Gastrocnemius medialis (tissue), 4 donors: ENCODE measurements at regions of chrX and their contacts with region 1.

Region 1: DNA sequence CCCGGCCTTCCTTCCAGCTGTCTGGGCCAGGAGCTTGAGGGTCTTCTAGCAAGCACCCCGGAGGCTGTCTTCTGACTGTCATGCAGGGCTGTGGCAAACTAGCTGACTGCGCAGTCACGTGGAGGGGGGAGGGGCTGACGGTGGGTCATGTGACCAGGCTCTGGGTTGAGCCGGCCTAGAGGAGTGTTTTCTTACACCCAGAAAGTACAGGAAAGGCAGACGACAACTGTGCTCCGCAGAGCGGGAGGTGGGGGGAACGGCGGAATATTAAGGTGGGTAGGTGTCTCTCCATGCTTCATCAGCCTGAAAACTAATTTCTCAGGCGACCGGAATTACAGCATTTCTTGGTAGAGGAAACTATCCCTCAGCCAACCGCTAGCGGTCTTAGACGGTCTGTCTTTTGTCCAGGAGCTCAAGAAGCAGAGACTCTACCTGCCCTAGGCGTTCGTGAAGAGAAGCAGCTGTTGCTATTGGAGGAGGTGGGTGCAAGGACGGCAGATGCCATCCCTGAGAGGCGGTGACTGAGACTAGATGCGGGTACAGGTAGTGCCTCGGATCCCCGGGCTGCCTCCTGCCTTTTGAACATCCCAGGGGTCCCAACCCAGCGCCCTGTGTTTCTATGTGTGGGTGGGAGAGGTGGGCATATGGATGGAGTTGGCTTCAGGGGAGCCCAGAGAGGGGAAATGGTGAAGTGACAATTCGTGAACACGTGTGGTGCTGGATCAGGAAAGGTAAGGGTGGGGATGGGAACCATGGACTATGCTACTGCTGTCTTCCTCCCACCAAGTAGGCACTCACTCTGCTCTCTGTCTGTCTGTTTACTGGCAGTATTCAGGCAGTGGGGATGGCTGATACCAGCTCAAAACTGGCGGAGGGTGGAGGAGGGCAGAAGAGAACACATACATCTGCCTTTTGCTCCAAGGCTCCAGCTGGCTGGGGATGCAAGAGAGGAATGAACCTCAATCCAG is 8.8 kb downstream of the GPRASP1 start:
- DNase-seq: peak; percentile 80 to 83
- ATAC-seq: peak; percentile 91 to 98
- H3K4me3 ChIP-seq: peak overlapping the region; percentile 55 to 69 (median 61)
- H3K27ac ChIP-seq: peak overlapping the region; percentile 77 to 84 (median 84)
- H3K4me1 ChIP-seq: no peaks in the 10 kb centered on the region
- H3K27me3 ChIP-seq: no peaks in the 10 kb centered on the region
- CTCF ChIP-seq: no peak
- POLR2A ChIP-seq: peak; percentile 47 to 77

Region 2: GRCh38 chrX:101931488-101932248 is 728.4 kb before region 1 on chrX and contains the start of gene ZMAT1:
- in situ Hi-C with region 1: no loop called
- intact Hi-C with region 1: loop called (anchors 5 kb)
- DNase-seq: peak; percentile 86 to 95
- ATAC-seq: peak; percentile 98 to 99
- H3K4me3 ChIP-seq: peak within 1 kb of the TSS; percentile 65 to 79 (median 71)
- H3K27ac ChIP-seq: peak within 1 kb of the TSS; percentile 87 to 98 (median 94)
- H3K4me1 ChIP-seq: no peaks in the 10 kb centered on the region
- H3K27me3 ChIP-seq: no peaks in the 10 kb centered on the region
- CTCF ChIP-seq: no peak
- POLR2A ChIP-seq: peak; percentile 86 to 90
- total RNA-seq, gene ZMAT1: 0.68 to 2.7 (median 1.2) TPM

Region 3: DNA sequence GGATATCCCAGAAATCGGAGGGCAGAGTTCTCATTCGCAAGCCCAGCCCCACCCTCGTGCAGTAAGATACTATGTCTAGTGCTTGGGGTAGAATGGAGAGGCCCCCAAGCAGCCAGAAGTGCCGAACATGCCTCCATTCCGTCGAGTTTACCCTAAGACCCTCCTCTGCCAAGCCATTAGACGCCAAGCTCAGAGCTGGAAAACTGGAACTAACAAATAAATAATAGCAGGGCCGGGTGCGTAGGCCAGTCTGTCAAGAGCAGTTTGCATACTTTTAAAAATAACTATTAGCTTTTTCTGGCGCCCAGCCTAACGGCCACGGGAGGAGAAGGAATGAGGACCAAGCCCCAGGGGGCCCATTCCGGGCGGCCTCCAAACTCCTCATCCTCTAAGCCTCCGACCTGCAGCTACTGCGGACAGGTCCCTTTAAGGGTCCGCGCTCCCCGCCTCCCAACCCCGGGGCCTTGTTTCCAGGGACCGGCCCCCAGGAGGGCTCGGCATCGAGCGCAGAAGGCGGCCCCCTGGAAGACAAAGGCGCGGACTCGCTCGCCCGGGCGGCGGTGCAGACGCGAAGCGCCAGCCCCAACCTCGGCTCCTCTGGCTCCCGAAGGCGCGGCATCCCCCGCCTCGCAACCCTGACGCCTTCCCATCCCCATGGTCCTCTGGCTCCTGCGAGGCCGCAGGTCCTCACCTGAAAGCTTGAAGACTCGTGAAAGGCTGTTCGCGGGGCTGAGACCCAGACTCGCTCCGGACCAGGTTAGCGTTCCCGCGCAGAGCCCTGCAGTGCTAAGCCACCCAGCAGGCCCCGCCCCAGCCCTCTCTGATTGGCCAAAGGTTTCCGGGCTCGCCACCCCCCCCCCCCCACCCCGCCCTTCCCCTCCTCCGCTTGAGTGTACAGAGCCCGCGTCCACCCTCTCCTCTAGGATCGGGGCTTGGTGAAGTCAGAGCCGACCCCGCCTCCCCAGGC is 143.8 kb before region 1 on chrX and contains the start of gene TMSB15A:
- in situ Hi-C with region 1: no loop called
- intact Hi-C with region 1: loop called (anchors 2 kb)
- DNase-seq: peak; percentile 4 to 32
- ATAC-seq: peak in 1 of 2 donors; percentile 33
- H3K4me3 ChIP-seq: peak within 1 kb of the TSS; percentile 43 to 52 (median 47)
- H3K27ac ChIP-seq: no peak within 1 kb of the TSS
- H3K4me1 ChIP-seq: no peaks in the 10 kb centered on the region
- H3K27me3 ChIP-seq: peaks cover 0 to 36% (median 30%) of the 10 kb centered on the region in 3 donors
- CTCF ChIP-seq: no peak
- POLR2A ChIP-seq: no peak
- total RNA-seq, gene TMSB15A: not detected

Region 4: GRCh38 chrX:103175944-103176753 is 516.1 kb after region 1 on chrX:
- in situ Hi-C with region 1: no loop called
- intact Hi-C with region 1: no loop called
- DNase-seq: no peak
- ATAC-seq: no peak
- H3K4me3 ChIP-seq: no peak overlapping the region
- H3K27ac ChIP-seq: no peak overlapping the region
- H3K4me1 ChIP-seq: no peaks in the 10 kb centered on the region
- H3K27me3 ChIP-seq: peaks cover 0 to 6% (median 4%) of the 10 kb centered on the region in 3 donors
- CTCF ChIP-seq: peak in 4 of 5 experiments; percentile 18 to 56 (median 35)
- POLR2A ChIP-seq: no peak